Ovary (tissue), 10 donors: ENCODE measurements at regions of chr13 and their contacts with region 1.

Region 1: DNA sequence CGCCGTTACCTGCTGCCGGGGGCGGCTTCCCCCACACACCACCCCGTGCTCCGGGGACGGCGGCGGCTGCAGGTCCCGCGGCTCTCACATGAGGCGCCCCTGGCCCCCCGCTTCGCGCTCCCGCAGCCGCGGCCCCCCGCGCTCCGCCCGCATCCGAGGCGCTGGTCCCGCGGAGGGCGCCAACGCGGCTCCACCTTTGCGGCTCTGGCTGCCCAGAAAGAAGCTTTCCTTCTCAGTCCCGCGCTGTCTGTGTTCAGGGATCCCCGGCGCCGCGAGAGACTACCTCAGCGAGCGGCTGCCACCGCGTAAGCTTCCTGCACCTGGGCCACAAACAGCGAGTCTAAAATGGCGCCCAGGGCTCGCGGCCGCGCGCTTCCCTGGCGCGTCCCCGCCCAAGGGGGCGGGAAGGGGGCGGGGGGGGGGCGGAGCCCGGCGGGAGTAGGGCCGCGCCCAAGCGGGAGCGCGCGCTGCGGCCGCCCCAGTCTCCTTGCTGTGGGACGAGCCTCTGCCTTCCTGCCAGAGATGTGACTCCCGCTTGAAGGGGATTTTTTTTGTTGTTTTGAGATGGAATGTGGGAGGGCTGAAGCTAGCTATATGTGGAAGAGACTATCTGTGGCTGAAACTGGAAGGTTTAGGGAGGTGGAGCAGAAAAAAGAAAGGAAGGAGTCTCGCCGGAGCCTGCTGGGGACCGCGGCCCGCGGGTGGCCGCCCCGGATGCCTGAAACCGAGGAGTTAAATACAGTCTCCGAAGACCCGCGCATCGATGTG is at the start of gene FBXL3:
- DNase-seq: peak; percentile 85 to 90 (median 88)
- H3K4me3 ChIP-seq: peak within 1 kb of the TSS; percentile 70
- H3K27ac ChIP-seq: peak within 1 kb of the TSS; percentile 99 to 100
- H3K4me1 ChIP-seq: peaks cover 9% of the 10 kb centered on the region
- H3K27me3 ChIP-seq: no peaks in the 10 kb centered on the region
- CTCF ChIP-seq: no peak
- EP300 ChIP-seq: no peak
- POLR2A ChIP-seq: peak; percentile 87
- total RNA-seq, gene FBXL3: 45.5 to 94.4 (median 56.3) TPM

Region 2: DNA sequence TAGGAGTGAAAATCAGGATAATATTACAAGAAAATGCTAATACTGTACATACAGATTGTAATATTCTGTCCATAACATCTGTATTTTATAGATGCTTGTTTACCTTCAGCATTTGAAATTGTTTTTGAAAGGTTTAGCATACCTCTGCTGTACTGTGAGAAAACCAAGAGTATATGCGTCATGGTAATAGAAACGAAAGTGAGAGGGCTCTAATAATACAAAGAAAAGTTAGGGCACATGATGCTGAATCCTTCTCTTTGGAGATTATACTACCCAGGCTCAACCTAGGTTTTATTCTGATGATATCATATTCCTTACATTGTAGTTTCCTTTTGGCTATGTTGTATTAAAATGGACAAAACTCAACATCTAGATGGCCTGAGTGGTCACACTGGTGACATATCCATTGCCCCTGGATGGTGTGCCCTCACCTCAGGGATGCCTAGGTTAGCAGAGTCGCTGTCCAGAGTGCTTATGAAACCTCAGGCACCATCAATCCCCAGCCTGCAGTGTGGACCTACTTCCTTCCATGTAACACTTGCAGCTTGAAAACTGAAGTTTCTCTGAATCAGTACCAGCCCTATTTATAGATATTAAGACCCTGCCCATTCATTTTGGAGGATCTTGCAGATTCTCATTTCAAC is 394.5 kb before region 1 on chr13:
- intact Hi-C with region 1: no loop called
- DNase-seq: no peak
- H3K4me3 ChIP-seq: no peak overlapping the region
- H3K27ac ChIP-seq: no peak overlapping the region
- H3K4me1 ChIP-seq: peaks cover 7% of the 10 kb centered on the region
- H3K27me3 ChIP-seq: no peaks in the 10 kb centered on the region
- CTCF ChIP-seq: no peak
- EP300 ChIP-seq: no peak
- POLR2A ChIP-seq: no peak

Region 3: GRCh38 chr13:76991796-76992547 is 35.0 kb before region 1 on chr13 and contains the start of gene CLN5:
- intact Hi-C with region 1: loop called in 1 of 4 experiments (anchors 5 kb)
- DNase-seq: peak; percentile 93 to 95 (median 94)
- H3K4me3 ChIP-seq: peak within 1 kb of the TSS; percentile 88
- H3K27ac ChIP-seq: peak within 1 kb of the TSS; percentile 93
- H3K4me1 ChIP-seq: peaks cover 9% of the 10 kb centered on the region
- H3K27me3 ChIP-seq: no peaks in the 10 kb centered on the region
- CTCF ChIP-seq: peak in 2 of 3 donors; percentile 40 to 55
- EP300 ChIP-seq: no peak
- POLR2A ChIP-seq: peak; percentile 96
- total RNA-seq, gene CLN5: 34.0 to 46.9 (median 36.6) TPM

Region 4: GRCh38 chr13:77329133-77329910 is 302.3 kb after region 1 on chr13:
- intact Hi-C with region 1: loop called in 1 of 4 experiments (anchors 10 kb)
- DNase-seq: peak; percentile 64 to 78 (median 76)
- H3K4me3 ChIP-seq: peak overlapping the region; percentile 77
- H3K27ac ChIP-seq: peak overlapping the region; percentile 72 to 79
- H3K4me1 ChIP-seq: peaks cover 1% of the 10 kb centered on the region
- H3K27me3 ChIP-seq: no peaks in the 10 kb centered on the region
- CTCF ChIP-seq: no peak
- EP300 ChIP-seq: no peak
- POLR2A ChIP-seq: peak; percentile 46